Activated B cell treated with CpG ODN at 0.5 μM for 24 hours (primary cell): ENCODE measurements at regions of chr17 and their contacts with region 1.

Region 1: DNA sequence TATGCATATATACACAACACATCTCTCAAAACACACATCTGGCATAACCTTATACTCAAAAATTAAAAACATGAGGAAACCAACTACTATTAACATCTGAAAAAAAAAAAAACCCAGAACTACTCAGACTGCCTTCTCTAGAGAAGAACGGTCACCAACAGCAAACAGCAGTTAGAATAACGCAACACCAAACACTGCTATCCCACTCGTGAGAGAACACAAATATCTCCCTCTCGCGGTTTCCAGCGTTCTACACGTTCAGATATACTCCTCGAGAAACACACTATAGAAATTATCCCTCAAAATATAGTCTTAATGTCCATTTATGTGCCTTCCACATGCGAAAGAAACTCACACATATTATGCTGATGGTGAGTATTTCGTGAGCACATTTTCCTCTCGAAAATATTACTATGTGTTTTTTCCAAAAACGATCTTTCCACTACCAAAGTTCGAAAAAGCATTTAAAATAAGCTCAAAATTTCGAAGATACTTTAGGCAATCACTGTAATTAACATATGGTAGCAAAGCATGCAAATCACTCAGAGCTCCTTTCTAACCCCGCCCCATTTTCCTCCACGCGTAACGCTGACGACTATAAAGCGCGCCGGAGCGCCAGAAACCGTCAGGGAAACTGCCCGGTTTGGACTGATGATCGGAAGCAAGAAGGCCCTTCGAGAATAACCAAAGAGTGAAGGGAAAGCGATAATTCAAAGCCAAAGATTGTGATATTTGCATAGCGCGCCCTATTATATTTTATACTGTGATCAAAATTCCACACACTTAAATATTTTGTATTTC is 60.1 kb downstream of the TEX14 start:
- DNase-seq: peak; percentile 91
- ATAC-seq: peak; percentile 83
- H3K4me3 Mint-ChIP-seq: no peak overlapping the region
- H3K27ac Mint-ChIP-seq: no peak overlapping the region
- H3K4me1 Mint-ChIP-seq: peaks cover 3% of the 10 kb centered on the region
- H3K27me3 Mint-ChIP-seq: no peaks in the 10 kb centered on the region
- CTCF ChIP-seq: no peak

Region 2: GRCh38 chr17:58317421-58318064 is 314.2 kb before region 1 on chr17:
- CTCF ChIA-PET with region 1: no interaction called
- POLR2A ChIA-PET with region 1: interaction called, 23 read pairs
- intact Hi-C with region 1: no loop called
- DNase-seq: peak; percentile 55
- ATAC-seq: peak; percentile 97
- H3K4me3 Mint-ChIP-seq: no peak overlapping the region
- H3K27ac Mint-ChIP-seq: peak overlapping the region; percentile 79
- H3K4me1 Mint-ChIP-seq: peaks cover 15% of the 10 kb centered on the region
- H3K27me3 Mint-ChIP-seq: no peaks in the 10 kb centered on the region
- CTCF ChIP-seq: no peak

Region 3: DNA sequence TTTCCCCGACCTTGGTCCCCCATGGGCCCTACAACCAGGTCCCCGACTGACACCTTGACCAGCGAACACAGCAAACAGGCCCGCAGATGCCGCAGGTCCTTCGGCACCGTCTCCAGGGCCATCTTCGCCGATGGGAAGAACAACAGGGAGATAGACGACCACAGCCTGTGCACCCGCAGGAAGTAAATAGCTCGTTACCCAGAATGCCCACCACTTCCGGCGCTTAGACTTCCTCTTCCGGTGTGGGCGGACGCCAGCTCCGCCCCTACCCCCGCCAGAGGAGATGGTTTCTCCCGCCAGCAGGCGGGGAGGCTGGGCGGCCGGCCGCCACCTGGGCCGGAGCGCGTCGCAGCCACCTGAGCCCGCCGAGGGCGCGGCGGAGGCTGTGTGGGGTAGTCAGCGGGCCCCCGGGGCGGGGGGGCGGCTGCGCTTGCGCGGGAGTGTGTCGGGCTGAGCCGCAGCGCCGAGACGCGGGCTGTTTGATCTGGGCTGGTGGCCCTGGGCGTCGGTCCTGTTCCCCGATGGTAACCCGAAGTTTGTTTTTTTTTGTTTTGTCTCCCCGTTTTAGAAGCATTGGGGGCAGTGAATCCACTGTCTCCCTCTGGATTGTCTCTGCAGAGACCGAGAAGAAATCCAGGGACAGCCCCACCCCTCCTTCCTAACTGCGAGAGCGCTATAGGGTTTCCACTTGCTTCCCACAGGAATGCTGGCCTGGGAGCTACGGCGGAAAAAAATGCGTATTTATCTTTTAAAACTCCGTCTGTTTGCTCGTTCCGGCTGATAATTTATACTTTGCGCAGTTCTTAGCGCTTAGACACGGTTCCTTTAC is 279.5 kb before region 1 on chr17 and contains the start of gene SUPT4H1:
- CTCF ChIA-PET with region 1: no interaction called
- POLR2A ChIA-PET with region 1: interaction called, 13 read pairs
- intact Hi-C with region 1: no loop called
- DNase-seq: peak; percentile 91
- ATAC-seq: peak; percentile 92
- H3K4me3 Mint-ChIP-seq: peak within 1 kb of the TSS; percentile 100
- H3K27ac Mint-ChIP-seq: peak within 1 kb of the TSS; percentile 97
- H3K4me1 Mint-ChIP-seq: peaks cover 49% of the 10 kb centered on the region
- H3K27me3 Mint-ChIP-seq: no peaks in the 10 kb centered on the region
- CTCF ChIP-seq: no peak
- total RNA-seq, gene SUPT4H1: 90.2 and 100 TPM in 2 replicates

Region 4: DNA sequence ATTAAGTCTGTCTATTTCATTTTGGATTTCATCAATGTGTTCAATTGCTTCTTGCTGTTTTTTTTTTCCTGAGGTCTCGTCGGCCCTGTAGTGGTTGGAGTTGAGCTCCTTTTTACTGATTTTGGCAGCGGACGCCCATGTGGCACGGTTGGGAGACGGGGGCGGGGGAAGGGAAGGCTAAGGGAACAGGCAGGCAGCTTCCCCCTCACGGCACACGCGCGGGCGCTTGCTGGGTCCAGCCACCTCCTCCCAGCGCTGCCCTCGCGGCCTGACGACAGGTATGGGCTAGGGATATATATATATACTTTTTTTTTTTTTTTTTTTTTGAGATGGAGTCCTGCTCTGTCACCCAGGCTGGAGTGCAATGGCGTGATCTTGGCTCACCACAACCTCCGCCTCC is 154.9 kb before region 1 on chr17:
- CTCF ChIA-PET with region 1: no interaction called
- POLR2A ChIA-PET with region 1: no interaction called
- intact Hi-C with region 1: no loop called
- DNase-seq: no peak
- ATAC-seq: no peak
- H3K4me3 Mint-ChIP-seq: no peak overlapping the region
- H3K27ac Mint-ChIP-seq: no peak overlapping the region
- H3K4me1 Mint-ChIP-seq: no peaks in the 10 kb centered on the region
- H3K27me3 Mint-ChIP-seq: no peaks in the 10 kb centered on the region
- CTCF ChIP-seq: no peak

Region 5: GRCh38 chr17:58531661-58532554 is 99.8 kb before region 1 on chr17:
- CTCF ChIA-PET with region 1: no interaction called
- POLR2A ChIA-PET with region 1: interaction called, 13 read pairs
- intact Hi-C with region 1: no loop called
- DNase-seq: peak; percentile 70
- ATAC-seq: peak; percentile 97
- H3K4me3 Mint-ChIP-seq: peak overlapping the region; percentile 63
- H3K27ac Mint-ChIP-seq: no peak overlapping the region
- H3K4me1 Mint-ChIP-seq: peaks cover 6% of the 10 kb centered on the region
- H3K27me3 Mint-ChIP-seq: peaks cover 30% of the 10 kb centered on the region
- CTCF ChIP-seq: no peak

Region 6: DNA sequence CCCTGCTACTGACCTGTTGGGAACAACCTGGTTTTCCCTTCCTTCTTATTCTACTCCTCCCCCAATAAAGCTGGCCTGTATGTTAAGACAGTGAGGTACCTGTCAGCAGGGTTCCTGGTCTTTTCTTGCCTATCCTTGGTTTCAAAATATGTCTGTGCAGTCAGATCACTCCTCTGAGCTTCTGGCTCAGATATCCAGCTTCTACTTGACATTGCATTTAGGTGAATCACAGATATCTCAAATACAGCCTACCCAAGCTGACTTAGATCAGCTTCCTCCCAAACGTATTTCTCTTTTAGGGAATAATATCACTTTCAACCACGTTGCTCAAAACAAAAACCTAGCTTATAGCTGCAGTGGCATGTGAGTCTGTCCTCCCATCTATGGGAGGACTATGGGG is 11.4 kb after region 1 on chr17:
- CTCF ChIA-PET with region 1: interaction called, 3 read pairs
- POLR2A ChIA-PET with region 1: interaction called, 37 read pairs
- intact Hi-C with region 1: no loop called
- DNase-seq: no peak
- ATAC-seq: no peak
- H3K4me3 Mint-ChIP-seq: no peak overlapping the region
- H3K27ac Mint-ChIP-seq: no peak overlapping the region
- H3K4me1 Mint-ChIP-seq: no peaks in the 10 kb centered on the region
- H3K27me3 Mint-ChIP-seq: no peaks in the 10 kb centered on the region
- CTCF ChIP-seq: no peak

Region 7: DNA sequence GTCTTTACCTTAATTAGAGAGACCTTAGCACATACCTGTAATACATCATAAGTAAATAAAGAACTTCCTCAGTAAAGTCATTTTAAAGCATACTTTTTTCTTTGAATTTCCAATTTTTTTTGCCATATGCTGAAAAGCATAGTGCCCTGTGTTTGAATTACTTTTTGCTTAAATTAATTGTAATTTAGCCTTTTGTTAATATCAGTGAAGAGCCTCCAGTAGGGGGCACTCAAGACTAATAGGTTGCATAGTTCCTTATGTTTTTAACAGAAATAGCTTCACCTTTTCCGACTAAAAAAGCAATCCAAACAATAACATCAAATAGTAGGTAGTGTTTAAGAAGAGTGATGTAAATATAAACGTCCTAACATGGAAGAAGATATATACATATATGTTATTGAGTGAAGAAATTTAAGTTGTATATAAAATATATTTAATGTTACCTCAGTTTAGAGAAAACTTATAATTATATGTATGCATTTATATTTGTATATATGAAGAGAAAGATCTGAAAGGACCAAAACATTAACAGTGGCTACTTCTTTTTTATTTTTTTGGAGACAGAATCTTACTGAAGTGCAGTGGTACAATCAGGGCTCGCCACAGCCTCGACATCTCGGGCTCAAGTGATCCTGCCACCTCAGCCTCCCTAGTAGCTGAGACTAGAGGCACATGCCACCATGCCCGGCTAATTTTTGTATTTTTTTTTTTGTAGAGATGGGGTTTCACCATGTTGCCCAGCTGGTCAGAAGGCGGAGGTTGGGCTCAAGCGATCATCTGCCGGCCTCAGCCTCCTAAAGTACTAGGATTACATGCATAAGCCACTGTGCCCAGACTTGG is 79.4 kb after region 1 on chr17:
- CTCF ChIA-PET with region 1: no interaction called
- POLR2A ChIA-PET with region 1: interaction called, 10 read pairs
- intact Hi-C with region 1: no loop called
- DNase-seq: no peak
- ATAC-seq: peak; percentile 40
- H3K4me3 Mint-ChIP-seq: no peak overlapping the region
- H3K27ac Mint-ChIP-seq: no peak overlapping the region
- H3K4me1 Mint-ChIP-seq: peaks cover 12% of the 10 kb centered on the region
- H3K27me3 Mint-ChIP-seq: no peaks in the 10 kb centered on the region
- CTCF ChIP-seq: no peak

Region 8: DNA sequence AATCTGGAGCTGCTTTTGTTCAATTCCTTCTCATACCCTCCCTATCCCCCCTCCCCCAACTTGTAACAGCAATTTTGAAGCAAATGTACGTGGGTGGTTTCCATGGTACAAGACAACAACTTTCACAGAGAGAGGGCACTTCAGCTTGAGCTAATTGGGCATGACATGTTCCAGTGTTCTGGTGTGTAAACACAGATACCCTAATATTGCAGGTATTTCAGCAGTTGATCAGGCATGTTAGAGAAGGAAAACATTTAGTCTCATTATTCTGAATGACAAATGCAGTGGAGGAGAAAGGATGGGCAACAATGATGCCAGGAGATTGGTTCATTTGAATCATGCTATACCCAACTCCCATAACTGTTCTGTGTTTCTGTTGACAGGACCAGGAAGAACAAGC is 337.4 kb after region 1 on chr17:
- CTCF ChIA-PET with region 1: no interaction called
- POLR2A ChIA-PET with region 1: no interaction called
- intact Hi-C with region 1: no loop called
- DNase-seq: no peak
- ATAC-seq: no peak
- H3K4me3 Mint-ChIP-seq: no peak overlapping the region
- H3K27ac Mint-ChIP-seq: no peak overlapping the region
- H3K4me1 Mint-ChIP-seq: peaks cover 4% of the 10 kb centered on the region
- H3K27me3 Mint-ChIP-seq: no peaks in the 10 kb centered on the region
- CTCF ChIP-seq: no peak

Region 9: DNA sequence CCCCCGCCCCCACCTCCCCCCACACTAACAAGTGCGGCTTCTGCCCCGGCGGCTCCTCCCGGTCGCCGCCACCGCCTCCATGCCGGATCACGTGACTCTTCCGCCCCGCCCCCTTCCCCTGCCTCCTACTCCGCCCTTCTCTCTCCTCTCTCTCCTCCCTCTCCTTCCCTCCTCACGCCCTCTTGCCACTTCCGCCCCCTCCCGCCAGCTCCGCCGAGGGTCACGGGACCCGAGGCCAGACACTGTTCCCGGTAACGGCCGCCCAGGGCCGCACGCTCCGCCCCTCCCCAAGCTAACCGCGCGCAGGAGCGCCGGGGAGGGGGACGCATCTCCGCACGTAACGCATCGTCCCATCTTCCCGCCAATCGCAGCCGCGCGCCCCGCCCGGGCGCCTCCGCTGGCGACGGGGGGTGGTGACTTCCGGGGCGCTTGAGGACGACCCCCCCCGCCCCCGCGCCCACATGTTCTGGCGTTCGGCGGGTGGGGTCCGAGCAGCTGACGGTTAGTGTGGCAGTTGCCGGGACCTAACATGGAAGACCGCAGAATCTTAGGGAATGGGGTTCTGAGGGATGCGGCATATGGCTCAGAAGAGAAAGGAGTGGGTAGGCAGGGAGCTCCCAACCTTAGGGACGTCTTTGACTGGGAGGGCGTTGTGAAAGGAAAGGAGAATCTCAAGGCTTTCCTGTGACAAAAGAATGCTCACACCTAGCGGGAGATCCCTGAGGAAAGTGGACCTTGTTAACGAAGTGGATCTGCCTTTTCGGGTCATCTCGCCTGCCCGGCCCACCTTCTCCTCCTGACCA is 1760.5 kb after region 1 on chr17 and contains the start of gene USP32:
- CTCF ChIA-PET with region 1: no interaction called
- POLR2A ChIA-PET with region 1: no interaction called
- intact Hi-C with region 1: loop called (anchors 10 kb)
- DNase-seq: peak; percentile 94
- ATAC-seq: peak; percentile 88
- H3K4me3 Mint-ChIP-seq: peak within 1 kb of the TSS; percentile 97
- H3K27ac Mint-ChIP-seq: peak within 1 kb of the TSS; percentile 96
- H3K4me1 Mint-ChIP-seq: peaks cover 66% of the 10 kb centered on the region
- H3K27me3 Mint-ChIP-seq: no peaks in the 10 kb centered on the region
- CTCF ChIP-seq: no peak
- total RNA-seq, gene USP32: 48.9 and 59.2 TPM in 2 replicates